ENCODE measurements at regions of chr17 and their contacts with region 1.

Region 1: GRCh38 chr17:82892899-82893565 is 53.2 kb upstream of the ZNF750 start:
- DNase-seq: peak; percentile 42 to 93 (median 84)
- ATAC-seq: peak; percentile 99 to 100
- H3K4me3 Mint-ChIP-seq: peak overlapping the region; percentile 34 to 88 (median 80)
- H3K27ac Mint-ChIP-seq: peak overlapping the region; percentile 90 to 99 (median 96)
- H3K4me1 Mint-ChIP-seq: peaks cover 13 to 46% (median 28%) of the 10 kb centered on the region in 4 donors
- H3K27me3 Mint-ChIP-seq: no peaks in the 10 kb centered on the region

Region 2: GRCh38 chr17:82911822-82912221 is 18.8 kb after region 1 on chr17:
- POLR2A ChIA-PET with region 1: interaction called, 14 read pairs
- DNase-seq: no peak
- ATAC-seq: no peak
- H3K4me3 Mint-ChIP-seq: peak overlapping the region in 2 of 10 donors; percentile 24 to 55
- H3K27ac Mint-ChIP-seq: peak overlapping the region in 8 of 10 donors; percentile 1 to 75 (median 44)
- H3K4me1 Mint-ChIP-seq: peaks cover 16 to 55% (median 34%) of the 10 kb centered on the region in 4 donors
- H3K27me3 Mint-ChIP-seq: no peaks in the 10 kb centered on the region